ENCODE measurements at regions of chr1 and their contacts with region 1.

Region 1: GRCh38 chr1:40783001-40783905 is at the start of gene KCNQ4:
- DNase-seq: no peak
- H3K4me3 ChIP-seq: peak within 1 kb of the TSS; percentile 24
- CTCF ChIP-seq: no peak

Region 2: GRCh38 chr1:40583980-40584379 is 199.3 kb before region 1 on chr1:
- in situ Hi-C with region 1: no loop called
- DNase-seq: no peak
- H3K4me3 ChIP-seq: no peak overlapping the region
- CTCF ChIP-seq: no peak

Region 3: DNA sequence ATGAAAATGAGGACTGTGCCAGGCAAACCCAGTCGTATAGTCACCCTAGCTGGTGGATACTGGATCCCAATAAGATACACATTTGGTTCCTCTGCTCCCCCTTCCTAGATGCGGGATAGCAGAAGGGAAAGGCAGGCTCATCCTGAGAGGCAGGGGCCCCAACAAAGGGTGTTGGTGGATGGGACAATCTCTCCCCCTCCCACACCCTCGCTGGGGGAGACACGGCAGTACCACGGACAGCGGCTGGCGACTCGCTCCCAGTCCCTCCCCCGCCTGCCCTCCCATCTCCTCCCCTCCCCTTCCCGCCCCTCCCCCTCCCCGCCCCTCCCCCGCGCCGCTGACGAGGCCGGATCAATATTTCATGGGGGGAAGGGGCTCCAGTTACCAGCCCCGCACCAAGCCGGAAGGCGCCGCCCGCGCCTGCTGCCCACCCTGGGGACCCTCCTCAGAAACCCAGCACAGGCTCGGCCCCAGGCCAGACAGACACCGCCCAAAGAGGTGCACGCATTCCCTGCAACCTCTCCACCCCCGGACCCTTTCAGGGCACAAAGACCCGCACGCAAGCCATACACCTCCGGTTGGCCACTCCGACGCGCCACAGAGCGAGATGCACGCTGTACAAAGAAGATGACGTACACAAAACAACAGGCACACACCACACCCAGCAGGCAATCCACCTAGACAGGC is 129.3 kb before region 1 on chr1:
- in situ Hi-C with region 1: no loop called
- DNase-seq: no peak
- H3K4me3 ChIP-seq: no peak overlapping the region
- CTCF ChIP-seq: no peak

Region 4: GRCh38 chr1:40722636-40723035 is 60.6 kb before region 1 on chr1:
- in situ Hi-C with region 1: loop called (anchors 10 kb)
- DNase-seq: no peak
- H3K4me3 ChIP-seq: no peak overlapping the region
- CTCF ChIP-seq: no peak

Region 5: DNA sequence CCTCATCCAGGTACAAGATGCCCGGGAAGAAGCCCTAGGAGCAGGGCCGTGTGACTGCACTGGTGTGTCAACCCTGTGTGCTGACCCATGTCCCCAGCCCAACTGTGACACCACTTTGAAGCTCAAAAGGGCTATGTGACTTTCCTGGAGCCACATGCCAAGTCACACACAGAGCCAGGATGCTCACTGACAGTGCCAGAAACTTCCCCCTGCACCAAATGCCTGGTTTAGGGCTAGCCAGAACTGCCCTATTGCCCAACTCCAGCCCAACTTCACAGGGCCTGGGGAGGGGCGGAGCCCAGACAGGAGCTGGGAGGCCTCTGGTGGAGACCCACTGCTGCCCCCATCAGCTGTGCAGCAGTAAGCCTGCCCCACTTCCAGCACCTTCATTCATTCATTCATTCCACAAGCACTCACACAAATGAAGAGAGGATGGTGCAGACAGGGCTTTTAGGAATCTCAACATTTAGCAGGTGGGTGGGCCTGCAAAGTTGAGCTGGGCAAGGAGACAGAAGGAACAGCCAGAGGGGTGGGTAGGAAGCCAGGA is 37.1 kb after region 1 on chr1:
- in situ Hi-C with region 1: loop called (anchors 5 kb)
- DNase-seq: no peak
- H3K4me3 ChIP-seq: no peak overlapping the region
- CTCF ChIP-seq: no peak